PC-3 (cell line): ENCODE measurements at regions of chr11 and their contacts with region 1.

Region 1: DNA sequence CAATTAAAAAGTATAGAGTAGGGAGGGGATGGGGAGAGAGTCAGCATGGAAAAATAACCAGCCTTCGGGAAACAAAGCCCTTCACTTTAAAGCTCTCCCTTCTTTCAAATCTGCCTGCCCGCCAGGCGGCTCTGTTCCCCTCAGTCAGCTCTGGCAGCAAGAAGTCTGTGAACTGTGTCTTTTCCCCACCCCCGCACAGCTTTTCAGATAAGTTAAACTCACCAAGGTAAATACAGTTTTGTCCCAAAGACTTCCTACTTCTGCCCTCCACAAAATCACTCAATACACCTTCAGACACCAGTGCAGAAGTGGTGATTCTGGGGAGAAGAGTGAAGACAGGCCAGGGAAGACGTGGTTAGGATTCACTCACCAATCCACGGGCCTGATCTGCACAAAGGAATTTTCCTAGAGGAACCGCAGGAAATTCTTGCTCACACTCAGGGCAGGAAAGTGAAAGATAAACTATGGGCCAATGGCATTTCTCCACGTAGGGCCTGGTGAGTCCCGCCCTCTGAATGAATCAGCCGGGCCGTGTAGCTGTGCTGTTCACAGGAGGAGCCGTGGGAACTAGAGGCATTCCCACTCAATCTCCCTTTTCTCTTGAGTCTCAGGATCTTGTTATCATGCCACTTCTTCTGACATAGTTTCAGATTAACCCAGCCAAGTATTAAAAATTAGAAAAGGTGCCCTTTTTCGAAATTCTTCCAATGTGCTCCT is at the start of gene TRIM5:
- DNase-seq: peak; percentile 95
- ATAC-seq: peak; percentile 97
- H3K4me3 ChIP-seq: peak within 1 kb of the TSS; percentile 75
- H3K27ac ChIP-seq: peak within 1 kb of the TSS; percentile 93
- H3K4me1 ChIP-seq: peaks cover 9% of the 10 kb centered on the region
- H3K27me3 ChIP-seq: no peaks in the 10 kb centered on the region
- CTCF ChIP-seq: peak; percentile 69
- total RNA-seq, gene TRIM5: 16.1 and 18.6 TPM in 2 replicates

Region 2: GRCh38 chr11:5600374-5600851 is 84.4 kb before region 1 on chr11:
- CTCF ChIA-PET with region 1: interaction called, 3 read pairs
- POLR2A ChIA-PET with region 1: interaction called, 3 read pairs
- intact Hi-C with region 1: loop called (anchors 1 kb)
- DNase-seq: peak; percentile 72
- ATAC-seq: peak; percentile 65
- H3K4me3 ChIP-seq: no peak overlapping the region
- H3K27ac ChIP-seq: no peak overlapping the region
- H3K4me1 ChIP-seq: peaks cover 20% of the 10 kb centered on the region
- H3K27me3 ChIP-seq: no peaks in the 10 kb centered on the region
- CTCF ChIP-seq: peak; percentile 79

Region 3: DNA sequence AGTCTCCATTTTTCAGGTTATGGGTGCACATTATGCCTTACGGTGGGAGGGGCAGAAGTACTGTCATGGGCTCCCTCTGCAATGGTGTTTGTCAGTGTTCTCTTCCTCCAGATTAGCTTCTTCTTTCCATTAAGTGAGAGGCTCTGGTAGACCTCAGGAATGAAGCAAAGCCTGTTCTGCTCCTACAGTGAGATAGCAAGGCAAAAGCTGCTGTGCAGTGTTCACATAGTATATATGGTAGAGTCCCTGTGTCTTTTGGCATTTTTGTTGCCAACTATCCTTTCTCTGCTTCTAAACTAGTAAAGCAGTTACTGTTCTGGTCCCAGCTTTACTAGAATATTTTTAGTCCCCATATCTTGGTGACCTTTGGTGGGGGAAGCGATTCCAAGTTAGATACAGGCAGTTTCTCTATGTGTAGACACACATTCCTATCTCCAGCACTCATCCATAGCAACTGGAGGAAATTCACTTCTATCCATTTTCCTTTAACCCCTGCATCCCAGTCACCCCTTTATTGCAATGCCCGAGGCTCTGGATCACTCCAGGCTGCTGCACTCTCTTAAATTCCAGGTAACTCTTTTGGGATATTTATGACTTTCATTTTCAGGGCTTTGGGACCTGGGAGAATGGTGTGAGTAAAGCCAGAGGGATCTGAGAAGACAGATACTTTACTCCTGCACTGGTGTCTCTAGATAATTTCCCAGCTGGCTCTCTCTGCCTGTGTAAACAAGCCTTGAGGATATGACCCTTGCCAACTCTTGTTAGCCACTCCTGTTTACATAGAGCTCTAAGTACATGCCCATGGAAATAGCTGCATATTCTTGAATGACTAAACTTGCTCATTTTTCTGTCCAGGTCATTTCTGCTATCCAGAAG is 63.9 kb before region 1 on chr11:
- CTCF ChIA-PET with region 1: interaction called, 4 read pairs
- POLR2A ChIA-PET with region 1: interaction called, 3 read pairs
- intact Hi-C with region 1: loop called (anchors 1 kb)
- DNase-seq: peak; percentile 87
- ATAC-seq: peak; percentile 85
- H3K4me3 ChIP-seq: peak overlapping the region; percentile 60
- H3K27ac ChIP-seq: peak overlapping the region; percentile 99
- H3K4me1 ChIP-seq: peaks cover 56% of the 10 kb centered on the region
- H3K27me3 ChIP-seq: no peaks in the 10 kb centered on the region
- CTCF ChIP-seq: no peak

Region 4: DNA sequence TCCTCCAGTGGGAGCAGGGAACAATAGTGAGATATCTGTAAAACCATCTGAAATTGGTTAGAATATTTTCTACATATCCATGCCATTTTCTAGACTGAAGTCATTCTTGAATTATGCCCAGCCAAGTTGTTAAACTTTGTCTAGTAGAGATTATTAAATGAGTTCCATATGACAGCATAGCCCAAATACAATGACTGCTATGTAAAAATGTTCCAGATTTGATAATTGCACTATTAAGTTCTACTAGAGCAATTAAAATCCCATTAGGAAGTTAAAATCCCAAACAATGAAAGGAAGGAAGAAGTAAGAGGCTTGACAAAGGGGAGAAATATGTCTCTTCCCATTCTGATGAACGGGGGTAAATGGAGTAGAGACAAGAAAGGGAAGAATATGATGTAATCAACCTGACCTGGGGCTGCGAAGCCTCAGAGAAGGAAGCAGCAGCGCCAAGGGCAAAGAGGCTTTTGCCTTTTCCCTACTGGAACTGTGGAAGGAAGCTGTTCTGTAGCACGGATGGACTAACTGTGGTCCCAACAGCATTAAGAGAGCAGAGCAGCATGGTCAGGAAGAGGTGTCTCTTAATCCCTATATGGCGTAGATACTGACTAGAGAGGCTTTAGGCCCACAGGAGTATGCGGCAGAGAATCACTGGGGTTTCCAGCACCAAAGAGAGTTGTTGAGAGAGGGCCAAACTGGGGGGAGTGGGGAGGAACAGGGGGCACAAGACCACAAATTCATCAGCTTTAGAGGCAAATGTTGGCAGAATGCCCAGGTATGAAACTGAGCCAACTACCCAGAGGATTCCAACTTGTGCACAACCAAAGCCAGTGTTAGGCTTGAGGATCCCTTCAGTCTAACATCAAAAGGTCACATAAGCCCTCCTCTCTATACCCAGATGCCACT is 891.9 kb after region 1 on chr11:
- CTCF ChIA-PET with region 1: interaction called, 14 read pairs
- POLR2A ChIA-PET with region 1: no interaction called
- intact Hi-C with region 1: no loop called
- DNase-seq: no peak
- ATAC-seq: no peak
- H3K4me3 ChIP-seq: no peak overlapping the region
- H3K27ac ChIP-seq: no peak overlapping the region
- H3K4me1 ChIP-seq: peaks cover 8% of the 10 kb centered on the region; the same call in 1 of the 2 replicates
- H3K27me3 ChIP-seq: no peaks in the 10 kb centered on the region
- CTCF ChIP-seq: no peak